WTC11 (cell line): ENCODE measurements at regions of chr11 and their contacts with region 1.

Region 1: DNA sequence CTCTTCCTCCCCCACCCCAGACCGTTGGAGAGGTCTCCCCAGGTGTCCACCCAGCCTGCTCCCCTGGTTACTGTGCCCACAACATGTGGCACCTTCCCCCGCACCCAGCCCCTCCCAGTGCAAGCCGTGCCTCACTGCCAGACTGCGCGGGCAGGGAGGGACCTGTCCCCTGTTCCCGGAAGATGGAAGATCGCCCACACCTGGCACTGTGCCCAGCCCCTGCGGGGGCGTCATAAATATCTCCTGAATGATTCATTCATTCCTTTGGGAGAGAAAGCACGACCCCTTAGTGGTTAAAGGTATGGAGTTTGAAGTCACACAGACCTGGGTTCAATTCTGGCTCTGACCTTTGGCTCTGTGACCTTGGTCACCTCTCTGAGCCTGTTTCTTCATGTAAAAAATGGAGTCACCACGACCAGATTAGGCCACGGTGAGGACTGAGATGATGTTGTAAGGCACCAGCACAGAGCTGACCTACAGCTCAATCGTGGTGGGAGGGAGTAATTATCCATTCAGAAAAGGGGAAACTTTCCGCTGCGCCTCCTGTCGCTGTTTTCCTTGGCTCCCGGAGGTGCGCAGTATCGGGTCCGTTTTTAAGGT is 506 bp upstream of the SYT12 start:
- DNase-seq: no peak
- ATAC-seq: no peak
- H3K4me3 Mint-ChIP-seq: peak overlapping the region; percentile 69
- H3K27ac Mint-ChIP-seq: no peak overlapping the region
- H3K4me1 Mint-ChIP-seq: peaks cover 14% of the 10 kb centered on the region
- H3K27me3 Mint-ChIP-seq: peaks cover 41% of the 10 kb centered on the region
- CTCF ChIP-seq: no peak

Region 2: GRCh38 chr11:66842896-66843775 is 179.3 kb before region 1 on chr11 and contains the start of gene RCE1:
- CTCF ChIA-PET with region 1: interaction called, 19 read pairs
- POLR2A ChIA-PET with region 1: no interaction called
- DNase-seq: peak; percentile 86
- ATAC-seq: peak; percentile 78
- H3K4me3 Mint-ChIP-seq: peak within 1 kb of the TSS; percentile 82
- H3K27ac Mint-ChIP-seq: peak within 1 kb of the TSS; percentile 87
- H3K4me1 Mint-ChIP-seq: peaks cover 20% of the 10 kb centered on the region
- H3K27me3 Mint-ChIP-seq: no peaks in the 10 kb centered on the region
- CTCF ChIP-seq: no peak
- total RNA-seq, gene RCE1: 34.5 to 36.9 TPM (median 34.6 TPM) in 3 replicates

Region 3: GRCh38 chr11:66883016-66883968 is 139.1 kb before region 1 on chr11:
- CTCF ChIA-PET with region 1: interaction called, 19 read pairs
- POLR2A ChIA-PET with region 1: no interaction called
- DNase-seq: peak; percentile 91
- ATAC-seq: peak; percentile 91
- H3K4me3 Mint-ChIP-seq: no peak overlapping the region
- H3K27ac Mint-ChIP-seq: peak overlapping the region; percentile 91
- H3K4me1 Mint-ChIP-seq: peaks cover 41% of the 10 kb centered on the region
- H3K27me3 Mint-ChIP-seq: no peaks in the 10 kb centered on the region
- CTCF ChIP-seq: peak; percentile 54

Region 4: GRCh38 chr11:66915046-66915832 is 107.2 kb before region 1 on chr11:
- CTCF ChIA-PET with region 1: interaction called, 16 read pairs
- POLR2A ChIA-PET with region 1: no interaction called
- DNase-seq: no peak
- ATAC-seq: peak; percentile 78
- H3K4me3 Mint-ChIP-seq: no peak overlapping the region
- H3K27ac Mint-ChIP-seq: no peak overlapping the region
- H3K4me1 Mint-ChIP-seq: peaks cover 40% of the 10 kb centered on the region
- H3K27me3 Mint-ChIP-seq: no peaks in the 10 kb centered on the region; the same call in 1 of the 2 replicates
- CTCF ChIP-seq: no peak

Region 5: GRCh38 chr11:66976048-66976467 is 46.4 kb before region 1 on chr11:
- CTCF ChIA-PET with region 1: interaction called, 27 read pairs
- POLR2A ChIA-PET with region 1: no interaction called
- DNase-seq: peak; percentile 89
- ATAC-seq: peak; percentile 92
- H3K4me3 Mint-ChIP-seq: no peak overlapping the region
- H3K27ac Mint-ChIP-seq: no peak overlapping the region
- H3K4me1 Mint-ChIP-seq: peaks cover 11% of the 10 kb centered on the region
- H3K27me3 Mint-ChIP-seq: no peaks in the 10 kb centered on the region
- CTCF ChIP-seq: peak; percentile 86

Region 6: GRCh38 chr11:66996609-66997405 is 25.6 kb before region 1 on chr11:
- CTCF ChIA-PET with region 1: interaction called, 26 read pairs
- POLR2A ChIA-PET with region 1: no interaction called
- DNase-seq: no peak
- ATAC-seq: no peak
- H3K4me3 Mint-ChIP-seq: no peak overlapping the region
- H3K27ac Mint-ChIP-seq: no peak overlapping the region; the same call in 1 of the 2 replicates
- H3K4me1 Mint-ChIP-seq: peaks cover 10% of the 10 kb centered on the region
- H3K27me3 Mint-ChIP-seq: no peaks in the 10 kb centered on the region
- CTCF ChIP-seq: no peak

Region 7: DNA sequence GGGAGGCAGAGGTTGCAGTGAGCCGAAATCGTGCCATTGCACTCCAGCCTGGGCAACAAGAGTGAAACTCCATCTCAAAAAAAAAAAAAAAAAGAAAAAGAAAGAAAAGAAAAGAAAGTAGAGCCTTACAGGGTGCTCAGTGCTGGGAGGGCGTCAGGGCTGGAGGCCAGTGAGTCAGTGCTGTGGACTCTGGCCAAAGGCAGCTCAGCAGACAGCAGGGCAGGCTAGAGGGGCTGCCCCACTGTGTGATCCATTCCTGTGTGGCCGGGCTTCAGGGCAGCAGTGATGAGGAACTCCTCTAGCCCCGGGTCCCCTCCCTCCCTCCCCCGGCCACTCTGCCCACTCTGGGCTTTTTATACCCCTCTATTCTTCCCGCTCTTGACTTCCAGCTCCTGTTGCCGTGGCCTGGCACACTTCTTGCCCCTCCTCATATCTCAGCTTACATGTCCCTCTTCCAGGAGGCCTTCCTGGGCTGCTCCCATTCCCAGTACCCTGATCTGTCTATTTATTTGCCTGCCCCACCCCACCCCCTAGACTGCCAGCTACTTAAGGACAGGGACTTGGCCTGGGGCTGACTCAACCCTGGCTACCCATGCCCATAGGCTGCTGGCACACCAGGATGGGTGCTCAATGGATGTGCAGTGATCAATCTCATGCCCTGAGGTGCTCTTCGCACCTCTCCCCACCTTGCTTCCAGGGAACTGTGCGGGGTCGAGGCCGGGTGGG is 10.6 kb after region 1 on chr11:
- CTCF ChIA-PET with region 1: interaction called, 10 read pairs
- POLR2A ChIA-PET with region 1: no interaction called
- DNase-seq: no peak
- ATAC-seq: no peak
- H3K4me3 Mint-ChIP-seq: no peak overlapping the region
- H3K27ac Mint-ChIP-seq: no peak overlapping the region
- H3K4me1 Mint-ChIP-seq: peaks cover 36% of the 10 kb centered on the region
- H3K27me3 Mint-ChIP-seq: no peaks in the 10 kb centered on the region
- CTCF ChIP-seq: no peak

Region 8: GRCh38 chr11:67099831-67100324 is 77.5 kb after region 1 on chr11:
- CTCF ChIA-PET with region 1: no interaction called
- POLR2A ChIA-PET with region 1: no interaction called
- DNase-seq: no peak
- ATAC-seq: no peak
- H3K4me3 Mint-ChIP-seq: no peak overlapping the region
- H3K27ac Mint-ChIP-seq: peak overlapping the region; percentile 63
- H3K4me1 Mint-ChIP-seq: peaks cover 21% of the 10 kb centered on the region
- H3K27me3 Mint-ChIP-seq: no peaks in the 10 kb centered on the region
- CTCF ChIP-seq: no peak